Activated CD8-positive, alpha-beta memory T cell treated with anti-CD3 and anti-CD28 coated beads, Interleukin-2, amount 10 ng/mL, durations not matched to agents 7 days and 5 days (primary cell): ENCODE measurements at regions of chr6 and their contacts with region 1.

Region 1: DNA sequence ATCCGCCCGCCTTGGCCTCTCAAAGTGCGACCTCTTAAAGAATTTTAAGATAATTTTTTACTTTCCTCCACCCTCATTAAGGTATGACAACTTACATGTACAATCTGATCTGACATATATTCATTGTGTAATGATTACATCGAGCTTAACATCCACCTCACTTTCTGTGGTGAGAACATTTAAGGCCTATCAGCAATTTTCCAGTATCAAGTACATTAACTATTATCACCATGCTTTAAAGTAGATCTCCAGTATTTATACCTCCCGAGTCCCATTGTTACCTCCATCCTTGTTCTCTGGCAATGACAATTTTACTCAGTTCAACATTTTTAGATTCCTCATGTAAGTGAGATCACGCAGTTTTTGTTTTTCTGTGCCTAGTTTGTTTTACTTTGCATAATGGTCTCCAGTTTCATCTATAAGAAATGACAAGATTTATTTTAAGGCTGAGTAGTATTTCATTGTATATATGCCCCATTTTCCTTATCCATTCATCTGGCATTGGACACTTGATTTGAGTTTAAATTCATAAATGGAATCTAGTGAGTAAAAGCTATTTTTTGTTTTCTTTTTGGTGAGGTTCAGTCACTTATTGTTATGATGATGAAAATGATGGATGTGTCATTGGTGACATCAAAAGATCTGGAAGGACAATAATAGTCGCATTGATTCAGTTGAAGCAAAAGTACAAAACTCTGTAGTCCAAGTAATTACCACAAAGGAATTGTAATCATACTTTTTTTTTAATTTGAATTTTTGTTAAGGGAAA is 87.0 kb downstream of the OR2B2 start:
- DNase-seq: no peak
- ATAC-seq: peak; percentile 5
- H3K4me3 Mint-ChIP-seq: peak overlapping the region; percentile 78
- H3K27ac Mint-ChIP-seq: peak overlapping the region; percentile 100
- H3K4me1 Mint-ChIP-seq: peaks cover 39% of the 10 kb centered on the region
- H3K27me3 Mint-ChIP-seq: peaks cover 3% of the 10 kb centered on the region

Region 2: GRCh38 chr6:27838058-27838944 is 13.1 kb after region 1 on chr6:
- CTCF ChIA-PET with region 1: interaction called, 14 read pairs
- DNase-seq: peak; percentile 94
- ATAC-seq: peak; percentile 75
- H3K4me3 Mint-ChIP-seq: no peak overlapping the region
- H3K27ac Mint-ChIP-seq: no peak overlapping the region
- H3K4me1 Mint-ChIP-seq: peaks cover 33% of the 10 kb centered on the region
- H3K27me3 Mint-ChIP-seq: no peaks in the 10 kb centered on the region